ENCODE measurements at regions of chr6 and their contacts with region 1.

Region 1: DNA sequence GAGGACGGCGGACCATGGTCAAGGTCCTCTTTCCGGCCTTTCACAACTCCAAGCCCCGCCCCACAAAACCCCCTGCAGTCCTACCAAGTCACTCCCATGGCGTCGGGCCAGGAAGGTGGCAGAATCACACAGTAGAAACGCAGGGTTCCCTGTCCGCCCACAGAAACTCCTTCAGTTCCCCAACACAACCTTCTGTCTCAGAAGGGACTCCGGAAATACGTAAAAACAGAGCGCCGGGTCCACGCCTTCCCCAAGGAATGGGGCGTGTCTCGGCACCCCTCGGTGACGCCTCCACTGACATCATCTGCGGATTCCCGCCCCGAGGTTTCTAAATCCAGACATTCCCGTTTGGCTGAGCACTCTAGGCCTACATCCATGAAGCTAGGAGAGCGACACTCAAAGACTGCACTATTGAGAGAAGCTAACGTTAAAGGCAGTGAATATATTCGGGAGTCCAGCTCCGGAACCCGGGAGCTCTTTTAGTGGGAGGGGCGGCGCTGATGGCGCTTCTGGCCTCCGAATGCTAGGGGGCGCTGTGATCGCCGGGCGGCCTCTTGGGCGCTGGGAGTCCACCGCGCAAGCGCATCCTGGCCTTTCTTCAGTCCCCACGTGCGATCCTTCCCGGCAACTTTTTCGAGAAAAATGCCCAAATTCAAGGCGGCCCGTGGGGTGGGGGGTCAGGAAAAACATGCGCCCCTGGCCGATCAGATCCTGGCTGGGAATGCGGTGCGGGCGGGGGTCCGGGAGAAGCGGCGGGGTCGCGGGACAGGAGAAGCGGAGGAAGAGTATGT is at the starts of genes BYSL and MED20:
- DNase-seq: peak; percentile 99
- H3K4me3 Mint-ChIP-seq: peak within 1 kb of the TSS; percentile 100
- H3K27ac Mint-ChIP-seq: peak within 1 kb of the TSS; percentile 98
- H3K4me1 Mint-ChIP-seq: peaks cover 49% of the 10 kb centered on the region
- H3K27me3 Mint-ChIP-seq: no peaks in the 10 kb centered on the region
- total RNA-seq, gene BYSL: 79.6 and 81.4 TPM in 2 replicates
- total RNA-seq, gene MED20: 21.9 and 22.8 TPM in 2 replicates

Region 2: DNA sequence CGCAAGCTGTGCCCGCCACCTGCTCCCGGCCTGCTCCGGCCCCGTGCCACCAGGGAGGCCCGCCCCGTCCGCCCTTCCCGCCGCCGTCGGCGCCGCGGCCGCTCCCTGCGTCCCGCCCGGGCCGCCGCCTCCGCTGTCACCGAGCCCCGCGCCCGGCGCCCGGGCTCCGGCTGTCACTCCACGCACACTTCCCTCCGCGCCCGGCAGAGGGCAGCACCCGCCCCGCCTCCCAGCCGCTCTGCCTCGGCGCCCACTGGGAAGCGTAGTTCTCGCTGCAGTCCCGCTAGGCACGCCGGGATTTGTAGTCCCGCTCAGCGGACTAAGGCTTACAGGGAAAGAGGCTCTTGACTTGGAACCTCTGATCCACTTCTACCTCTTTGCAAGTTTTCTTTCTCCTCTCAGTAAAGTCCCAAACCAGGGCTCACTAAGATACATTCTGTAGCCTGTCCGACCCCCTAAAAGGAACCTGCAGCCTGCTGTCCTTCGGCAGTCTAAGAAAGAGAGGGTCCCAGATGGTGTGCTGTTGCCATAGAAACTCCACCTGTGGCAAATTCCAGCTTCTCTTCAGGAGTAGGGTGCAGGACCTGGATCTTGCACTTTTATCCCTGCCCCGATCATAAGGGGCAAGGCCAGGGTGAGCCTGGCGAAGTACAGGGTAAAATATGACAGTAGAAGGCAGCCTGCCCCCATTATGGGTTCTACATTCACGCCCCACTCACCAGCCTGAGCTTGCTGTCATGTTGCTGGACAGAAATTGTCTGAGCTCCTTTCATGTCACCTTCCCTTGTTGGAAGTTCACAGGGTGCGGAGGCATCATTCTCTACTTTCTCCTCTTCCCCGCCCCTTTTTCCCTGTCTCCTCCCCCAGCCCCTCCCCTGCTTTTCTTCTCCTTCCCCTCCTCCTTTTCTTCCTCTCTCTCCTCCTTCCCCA is 185.4 kb before region 1 on chr6 and contains the start of gene TFEB:
- intact Hi-C with region 1: loop called (anchors 1 kb)
- DNase-seq: peak; percentile 99
- H3K4me3 Mint-ChIP-seq: peak within 1 kb of the TSS; percentile 86
- H3K27ac Mint-ChIP-seq: peak within 1 kb of the TSS; percentile 62
- H3K4me1 Mint-ChIP-seq: peaks cover 30% of the 10 kb centered on the region
- H3K27me3 Mint-ChIP-seq: no peaks in the 10 kb centered on the region
- total RNA-seq, gene TFEB: 14.1 and 14.9 TPM in 2 replicates

Region 3: GRCh38 chr6:41846666-41847237 is 74.4 kb before region 1 on chr6:
- intact Hi-C with region 1: loop called (anchors 1 kb)
- DNase-seq: peak; percentile 90
- H3K4me3 Mint-ChIP-seq: no peak overlapping the region
- H3K27ac Mint-ChIP-seq: no peak overlapping the region
- H3K4me1 Mint-ChIP-seq: peaks cover 10% of the 10 kb centered on the region
- H3K27me3 Mint-ChIP-seq: no peaks in the 10 kb centered on the region

Region 4: GRCh38 chr6:41936073-41936837 is 15.1 kb after region 1 on chr6:
- intact Hi-C with region 1: loop called (anchors 1 kb)
- DNase-seq: peak; percentile 96
- H3K4me3 Mint-ChIP-seq: peak overlapping the region; percentile 100
- H3K27ac Mint-ChIP-seq: peak overlapping the region; percentile 87
- H3K4me1 Mint-ChIP-seq: peaks cover 68% of the 10 kb centered on the region
- H3K27me3 Mint-ChIP-seq: no peaks in the 10 kb centered on the region

Region 5: GRCh38 chr6:41958022-41958856 is 37.1 kb after region 1 on chr6:
- intact Hi-C with region 1: loop called (anchors 1 kb)
- DNase-seq: no peak
- H3K4me3 Mint-ChIP-seq: peak overlapping the region; percentile 75
- H3K27ac Mint-ChIP-seq: peak overlapping the region; percentile 98
- H3K4me1 Mint-ChIP-seq: peaks cover 39% of the 10 kb centered on the region
- H3K27me3 Mint-ChIP-seq: no peaks in the 10 kb centered on the region

Region 6: GRCh38 chr6:42050266-42051032 is 129.3 kb after region 1 on chr6 and contains the start of gene TAF8:
- intact Hi-C with region 1: loop called (anchors 2 kb)
- DNase-seq: peak; percentile 97
- H3K4me3 Mint-ChIP-seq: peak within 1 kb of the TSS; percentile 98
- H3K27ac Mint-ChIP-seq: peak within 1 kb of the TSS; percentile 99
- H3K4me1 Mint-ChIP-seq: peaks cover 65% of the 10 kb centered on the region
- H3K27me3 Mint-ChIP-seq: no peaks in the 10 kb centered on the region
- total RNA-seq, gene TAF8: 38.1 and 38.7 TPM in 2 replicates

Region 7: GRCh38 chr6:42563697-42564505 is 642.8 kb after region 1 on chr6 and contains the start of gene UBR2:
- intact Hi-C with region 1: loop called (anchors 1 kb)
- DNase-seq: peak; percentile 98
- H3K4me3 Mint-ChIP-seq: peak within 1 kb of the TSS; percentile 99
- H3K27ac Mint-ChIP-seq: peak within 1 kb of the TSS; percentile 93
- H3K4me1 Mint-ChIP-seq: peaks cover 25% of the 10 kb centered on the region
- H3K27me3 Mint-ChIP-seq: peaks cover 2% of the 10 kb centered on the region
- total RNA-seq, gene UBR2: 30.1 and 30.8 TPM in 2 replicates

Region 8: DNA sequence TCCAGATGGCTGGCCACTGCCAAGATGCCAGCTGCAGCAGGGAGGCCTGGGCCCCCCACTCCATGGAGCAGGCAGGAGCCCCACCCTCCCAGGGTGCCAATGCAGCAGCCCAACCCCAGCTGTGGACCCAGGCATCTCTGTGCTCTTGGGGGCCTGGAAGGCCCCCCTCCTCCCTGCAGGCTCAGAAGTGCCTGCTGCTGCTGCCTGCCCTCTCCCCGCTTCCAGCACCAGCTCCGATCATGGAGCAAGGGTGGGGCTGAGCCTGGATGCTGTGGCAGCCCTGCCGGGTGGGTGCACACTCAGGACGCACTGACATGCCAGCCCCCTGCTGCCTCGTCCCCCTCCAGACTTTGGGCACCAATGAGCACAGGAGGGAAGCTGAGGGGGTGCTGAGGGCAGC is 1491.4 kb after region 1 on chr6:
- intact Hi-C with region 1: no loop called
- DNase-seq: no peak
- H3K4me3 Mint-ChIP-seq: no peak overlapping the region
- H3K27ac Mint-ChIP-seq: no peak overlapping the region
- H3K4me1 Mint-ChIP-seq: no peaks in the 10 kb centered on the region
- H3K27me3 Mint-ChIP-seq: peaks cover 27% of the 10 kb centered on the region

Measured in activated CD4-positive, alpha-beta T cell treated with anti-CD3 and anti-CD28 coated beads, Interleukin-2, amount 10 ng/mL, durations not matched to agents 24 days and 14 days (primary cell).